CD8-positive, alpha-beta T cell (primary cell): ENCODE measurements at regions of chr19 and their contacts with region 1.

Region 1: GRCh38 chr19:40285353-40286234 is 449 bp upstream of the AKT2 start:
- DNase-seq: peak; percentile 95 to 100 (median 96)
- ATAC-seq: peak; percentile 72
- H3K4me3 ChIP-seq: peak overlapping the region; percentile 63 to 80
- H3K4me3 Mint-ChIP-seq: peak overlapping the region; percentile 98
- H3K27ac ChIP-seq: peak overlapping the region; percentile 92 to 94
- H3K27ac Mint-ChIP-seq: peak overlapping the region; percentile 99
- H3K4me1 ChIP-seq: peaks cover 38% of the 10 kb centered on the region
- H3K4me1 Mint-ChIP-seq: peaks cover 48% of the 10 kb centered on the region
- H3K27me3 ChIP-seq: no peaks in the 10 kb centered on the region
- H3K27me3 Mint-ChIP-seq: no peaks in the 10 kb centered on the region
- CTCF ChIP-seq: no peak

Region 2: GRCh38 chr19:39996811-39997594 is 288.6 kb before region 1 on chr19 and contains the start of gene ZNF546:
- CTCF ChIA-PET with region 1: no interaction called
- POLR2A ChIA-PET with region 1: no interaction called
- intact Hi-C with region 1: loop called in 1 of 2 experiments (anchors 10 kb)
- DNase-seq: peak; percentile 70 to 94 (median 90)
- ATAC-seq: peak; percentile 88
- H3K4me3 ChIP-seq: peak within 1 kb of the TSS; percentile 80 to 85
- H3K4me3 Mint-ChIP-seq: peak within 1 kb of the TSS; percentile 90
- H3K27ac ChIP-seq: peak within 1 kb of the TSS; percentile 77 to 88
- H3K27ac Mint-ChIP-seq: peak within 1 kb of the TSS; percentile 92
- H3K4me1 ChIP-seq: peaks cover 15% of the 10 kb centered on the region
- H3K4me1 Mint-ChIP-seq: peaks cover 41% of the 10 kb centered on the region
- H3K27me3 ChIP-seq: no peaks in the 10 kb centered on the region
- H3K27me3 Mint-ChIP-seq: no peaks in the 10 kb centered on the region
- CTCF ChIP-seq: no peak
- total RNA-seq, gene ZNF546: 1.6 to 2.4 TPM

Region 3: DNA sequence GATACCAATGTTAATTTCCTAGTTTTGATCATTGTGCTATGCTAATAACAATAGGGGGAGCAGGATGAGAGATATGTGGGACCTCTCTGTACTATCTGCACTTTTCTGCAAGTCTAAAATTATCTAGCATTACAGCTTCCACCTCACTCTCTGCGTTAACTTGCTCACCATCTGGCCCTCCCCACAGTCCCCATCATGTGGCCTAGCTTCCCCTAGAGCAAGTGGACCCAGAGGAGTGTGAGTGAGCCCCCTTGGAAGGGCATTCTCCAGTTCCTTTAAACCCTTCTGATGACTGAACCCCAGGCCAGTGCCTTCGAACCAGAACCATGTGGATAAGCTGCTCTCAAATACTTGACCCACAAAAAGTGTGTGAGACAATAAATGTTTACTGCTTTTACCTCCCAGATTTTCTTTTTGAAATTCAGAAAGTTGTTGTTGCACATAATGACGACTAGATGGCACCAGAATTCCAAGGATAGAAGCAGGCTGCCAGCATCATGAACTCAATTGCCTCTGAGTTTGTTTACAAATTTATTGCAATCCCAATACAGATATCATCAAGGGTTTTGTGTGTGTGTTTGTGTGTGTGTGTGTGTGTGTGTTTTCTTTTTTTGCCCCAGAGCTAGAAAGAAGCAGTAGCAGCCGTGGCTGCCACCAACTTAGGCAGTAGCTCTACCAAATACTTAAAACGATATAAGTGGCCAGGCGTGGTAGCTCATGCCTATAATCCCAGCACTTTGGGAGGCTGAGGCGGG is 145.9 kb before region 1 on chr19:
- CTCF ChIA-PET with region 1: no interaction called
- POLR2A ChIA-PET with region 1: no interaction called
- intact Hi-C with region 1: loop called in 1 of 2 experiments (anchors 1 kb)
- DNase-seq: peak in 4 of 9 experiments; percentile 14 to 78 (median 46)
- ATAC-seq: peak; percentile 30
- H3K4me3 ChIP-seq: no peak overlapping the region
- H3K4me3 Mint-ChIP-seq: no peak overlapping the region
- H3K27ac ChIP-seq: no peak overlapping the region
- H3K27ac Mint-ChIP-seq: no peak overlapping the region
- H3K4me1 ChIP-seq: peaks cover 26% of the 10 kb centered on the region
- H3K4me1 Mint-ChIP-seq: peaks cover 26% of the 10 kb centered on the region
- H3K27me3 ChIP-seq: no peaks in the 10 kb centered on the region
- H3K27me3 Mint-ChIP-seq: peaks cover 9% of the 10 kb centered on the region
- CTCF ChIP-seq: peak; percentile 71

Region 4: DNA sequence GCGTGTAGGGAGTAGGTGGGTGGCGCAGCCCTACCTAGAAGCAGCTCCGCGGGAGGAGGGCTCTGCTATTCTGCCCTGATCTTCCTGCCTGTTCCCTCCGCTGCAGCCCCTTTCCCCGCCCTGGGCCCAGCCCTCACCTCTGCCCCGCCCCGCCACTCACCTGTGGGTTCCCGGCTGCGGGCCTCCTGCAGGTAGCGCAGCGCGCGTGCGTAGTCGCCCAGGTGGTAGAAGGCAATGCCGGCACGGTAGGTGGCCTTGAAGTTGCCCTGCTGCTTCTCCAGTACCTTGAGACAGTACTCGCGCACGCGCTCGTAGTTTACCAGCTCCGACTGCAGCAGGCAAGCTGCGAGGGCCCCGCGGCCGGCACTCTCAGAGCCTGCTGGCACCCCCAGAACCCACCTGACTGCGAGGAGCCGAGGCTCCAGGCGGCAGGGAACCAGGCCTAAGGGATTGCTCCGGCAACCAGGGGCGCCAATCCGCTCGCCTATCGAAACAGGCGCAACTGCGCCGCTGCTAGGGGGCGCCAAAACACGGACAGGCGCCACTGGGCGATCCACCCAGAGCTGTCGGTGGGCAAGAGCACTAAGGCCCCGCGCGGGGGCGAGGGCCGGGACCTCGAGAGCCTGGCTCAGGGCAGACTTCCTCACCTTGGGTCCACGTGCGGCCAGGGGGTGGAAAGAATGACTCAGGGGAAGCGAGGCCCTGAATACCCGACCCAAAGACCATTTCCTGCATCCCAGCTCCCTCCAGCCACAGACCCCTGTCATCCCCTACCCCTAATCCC is 68.4 kb before region 1 on chr19:
- CTCF ChIA-PET with region 1: no interaction called
- POLR2A ChIA-PET with region 1: no interaction called
- intact Hi-C with region 1: no loop called
- DNase-seq: no peak
- ATAC-seq: no peak
- H3K4me3 ChIP-seq: no peak overlapping the region
- H3K4me3 Mint-ChIP-seq: no peak overlapping the region
- H3K27ac ChIP-seq: no peak overlapping the region
- H3K27ac Mint-ChIP-seq: no peak overlapping the region
- H3K4me1 ChIP-seq: no peaks in the 10 kb centered on the region
- H3K4me1 Mint-ChIP-seq: peaks cover 8% of the 10 kb centered on the region
- H3K27me3 ChIP-seq: peaks cover 18 to 22% of the 10 kb centered on the region in 2 experiments
- H3K27me3 Mint-ChIP-seq: peaks cover 42% of the 10 kb centered on the region
- CTCF ChIP-seq: no peak

Region 5: DNA sequence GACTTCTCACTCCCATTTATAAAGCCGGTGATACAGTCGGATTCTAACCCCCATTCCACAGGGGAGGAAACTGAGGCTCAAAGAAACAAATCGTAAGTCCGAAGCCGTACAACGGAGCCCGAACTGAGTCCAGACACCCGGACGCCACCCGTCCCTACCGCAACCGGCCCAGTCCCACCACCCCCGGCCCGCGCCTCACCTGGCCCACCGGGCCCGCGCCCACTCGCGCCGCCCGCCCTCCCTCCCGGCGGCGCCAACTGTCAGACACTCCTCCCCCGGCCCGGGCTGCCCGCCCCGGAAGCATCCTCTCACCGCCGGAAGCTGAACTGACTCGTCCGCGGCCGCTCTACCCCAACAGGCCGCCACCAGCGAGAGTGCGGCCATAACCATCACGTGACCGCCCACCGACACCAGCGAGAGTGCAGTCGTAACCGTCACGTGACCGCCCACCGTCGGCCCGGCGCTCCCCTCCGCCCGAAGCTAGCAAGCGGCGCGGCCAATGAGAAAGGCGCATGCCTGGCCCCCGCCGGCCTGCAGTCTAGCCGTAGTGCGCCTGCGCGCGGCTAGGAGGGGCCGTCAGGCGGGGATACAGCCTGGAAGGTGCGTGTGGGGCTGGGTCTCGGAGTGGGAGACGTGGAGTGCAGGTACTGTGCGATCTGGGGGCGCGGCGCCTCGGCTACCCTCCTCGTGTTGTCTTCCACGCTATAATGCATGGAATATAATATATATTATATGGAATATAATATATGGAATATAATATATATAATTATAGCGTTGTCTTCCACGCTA is 62.7 kb after region 1 on chr19 and contains the starts of genes C19orf47 and PLD3:
- CTCF ChIA-PET with region 1: no interaction called
- POLR2A ChIA-PET with region 1: interaction called, 3 read pairs
- intact Hi-C with region 1: loop called (anchors 1 kb)
- DNase-seq: peak; percentile 96 to 100 (median 98)
- ATAC-seq: peak; percentile 89
- H3K4me3 ChIP-seq: peak within 1 kb of the TSS; percentile 61 to 89
- H3K4me3 Mint-ChIP-seq: peak within 1 kb of the TSS; percentile 88
- H3K27ac ChIP-seq: peak within 1 kb of the TSS; percentile 73
- H3K27ac Mint-ChIP-seq: peak within 1 kb of the TSS; percentile 90
- H3K4me1 ChIP-seq: peaks cover 13% of the 10 kb centered on the region
- H3K4me1 Mint-ChIP-seq: peaks cover 37% of the 10 kb centered on the region
- H3K27me3 ChIP-seq: no peaks in the 10 kb centered on the region
- H3K27me3 Mint-ChIP-seq: no peaks in the 10 kb centered on the region
- CTCF ChIP-seq: no peak
- total RNA-seq, gene C19orf47: 10.2 to 11.2 TPM
- total RNA-seq, gene PLD3: 48.9 to 56.1 TPM

Region 6: GRCh38 chr19:40425450-40426287 is 140.1 kb after region 1 on chr19 and contains the start of gene SERTAD1:
- CTCF ChIA-PET with region 1: no interaction called
- POLR2A ChIA-PET with region 1: no interaction called
- intact Hi-C with region 1: loop called (anchors 5 kb)
- DNase-seq: peak; percentile 100
- ATAC-seq: peak; percentile 93
- H3K4me3 ChIP-seq: peak within 1 kb of the TSS; percentile 72 to 92
- H3K4me3 Mint-ChIP-seq: peak within 1 kb of the TSS; percentile 92
- H3K27ac ChIP-seq: peak within 1 kb of the TSS; percentile 91 to 92
- H3K27ac Mint-ChIP-seq: peak within 1 kb of the TSS; percentile 98
- H3K4me1 ChIP-seq: peaks cover 17% of the 10 kb centered on the region
- H3K4me1 Mint-ChIP-seq: peaks cover 28% of the 10 kb centered on the region
- H3K27me3 ChIP-seq: no peaks in the 10 kb centered on the region
- H3K27me3 Mint-ChIP-seq: no peaks in the 10 kb centered on the region
- CTCF ChIP-seq: peak; percentile 55
- total RNA-seq, gene SERTAD1: 36.7 to 38.7 TPM

Region 7: DNA sequence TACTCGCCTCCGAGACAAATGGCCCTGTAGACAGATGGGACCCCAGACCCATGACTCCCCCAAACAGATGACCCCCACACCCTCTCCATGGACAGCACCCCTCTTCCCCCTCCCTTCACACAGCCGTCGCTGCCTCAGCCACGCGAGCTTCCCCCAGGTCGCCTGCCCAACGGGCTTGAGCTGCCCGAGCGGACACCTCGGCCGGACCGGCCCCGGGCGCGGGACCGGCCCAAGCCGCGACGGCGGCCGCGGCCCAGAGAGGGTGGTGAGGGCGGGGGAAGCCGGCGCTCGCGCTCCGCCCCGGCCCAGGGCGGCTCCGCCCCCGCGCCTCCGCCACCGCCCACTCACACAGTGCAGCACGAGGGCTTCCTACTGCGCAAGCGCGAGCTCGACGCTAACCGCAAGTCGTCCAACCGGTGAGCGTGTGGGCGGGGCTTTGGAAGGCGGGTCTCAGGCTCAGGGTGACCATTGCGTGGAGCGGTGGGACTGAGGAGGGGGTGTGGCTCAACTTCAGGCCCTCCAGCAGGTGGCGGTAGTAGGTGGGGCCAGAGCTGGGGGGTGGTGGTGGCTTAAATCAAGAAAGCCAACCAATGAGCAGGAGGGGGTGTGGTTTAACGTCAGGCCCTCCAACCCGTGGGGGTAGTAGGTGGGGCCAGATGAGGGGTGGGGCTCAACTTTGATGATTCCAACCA is 284.9 kb after region 1 on chr19:
- CTCF ChIA-PET with region 1: no interaction called
- POLR2A ChIA-PET with region 1: no interaction called
- intact Hi-C with region 1: loop called in 1 of 2 experiments (anchors 1 kb)
- DNase-seq: peak; percentile 86 to 100 (median 94)
- ATAC-seq: peak; percentile 93
- H3K4me3 ChIP-seq: peak overlapping the region; percentile 34 to 51
- H3K4me3 Mint-ChIP-seq: peak overlapping the region; percentile 72
- H3K27ac ChIP-seq: peak overlapping the region in 1 of 2 experiments; percentile 56
- H3K27ac Mint-ChIP-seq: peak overlapping the region; percentile 67
- H3K4me1 ChIP-seq: peaks cover 18% of the 10 kb centered on the region
- H3K4me1 Mint-ChIP-seq: peaks cover 13% of the 10 kb centered on the region
- H3K27me3 ChIP-seq: peaks cover 6 to 9% of the 10 kb centered on the region in 2 experiments
- H3K27me3 Mint-ChIP-seq: peaks cover 11% of the 10 kb centered on the region
- CTCF ChIP-seq: no peak

Region 8: DNA sequence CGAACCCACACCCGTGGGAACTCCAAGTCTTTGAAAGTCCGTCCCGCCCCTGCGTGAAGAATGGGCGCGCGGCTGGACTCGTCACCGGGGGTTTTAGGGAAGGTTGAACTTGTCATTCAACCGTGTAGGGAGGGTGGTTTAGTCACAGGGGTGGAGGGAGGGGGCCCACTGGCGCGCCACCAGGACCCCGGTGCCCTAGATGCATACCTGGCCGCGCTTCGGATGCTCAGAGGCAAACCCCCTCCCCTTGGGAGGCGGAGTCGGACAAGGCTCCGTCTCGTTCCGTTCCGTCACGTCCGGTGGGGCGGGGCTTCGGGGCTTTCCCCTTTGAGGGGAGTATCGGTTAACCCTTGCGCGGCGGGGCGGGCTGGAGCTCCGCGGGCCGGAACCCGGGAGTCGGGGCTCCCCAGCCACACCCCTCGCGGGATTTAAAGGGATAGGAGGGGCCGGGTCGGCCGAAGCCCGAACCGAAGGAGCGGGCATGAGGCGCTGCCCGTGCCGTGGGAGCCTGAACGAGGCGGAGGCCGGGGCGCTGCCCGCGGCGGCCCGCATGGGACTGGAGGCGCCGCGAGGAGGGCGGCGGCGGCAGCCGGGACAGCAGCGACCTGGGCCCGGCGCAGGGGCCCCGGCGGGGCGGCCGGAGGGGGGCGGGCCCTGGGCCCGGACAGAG is 431.2 kb after region 1 on chr19 and contains the starts of genes COQ8B and ITPKC:
- CTCF ChIA-PET with region 1: no interaction called
- POLR2A ChIA-PET with region 1: no interaction called
- intact Hi-C with region 1: loop called in 1 of 2 experiments (anchors 5 kb)
- DNase-seq: peak; percentile 98 to 100 (median 100)
- ATAC-seq: peak; percentile 74
- H3K4me3 ChIP-seq: peak within 1 kb of the TSS; percentile 66 to 93
- H3K4me3 Mint-ChIP-seq: peak within 1 kb of the TSS; percentile 88
- H3K27ac ChIP-seq: peak within 1 kb of the TSS; percentile 88 to 89
- H3K27ac Mint-ChIP-seq: peak within 1 kb of the TSS; percentile 97
- H3K4me1 ChIP-seq: peaks cover 61% of the 10 kb centered on the region
- H3K4me1 Mint-ChIP-seq: peaks cover 70% of the 10 kb centered on the region
- H3K27me3 ChIP-seq: no peaks in the 10 kb centered on the region
- H3K27me3 Mint-ChIP-seq: no peaks in the 10 kb centered on the region
- CTCF ChIP-seq: no peak
- total RNA-seq, gene COQ8B: 14.0 to 14.2 TPM
- total RNA-seq, gene ITPKC: 5.9 to 6.4 TPM